ENCODE measurements at regions of chr1 and their contacts with region 1.

Region 1: GRCh38 chr1:16458831-16459230 is 18.3 kb downstream of the NECAP2 start:
- DNase-seq: no peak
- H3K4me3 ChIP-seq: no peak overlapping the region
- H3K27ac ChIP-seq: no peak overlapping the region
- H3K4me1 ChIP-seq: no peaks in the 10 kb centered on the region
- H3K27me3 ChIP-seq: no peaks in the 10 kb centered on the region
- CTCF ChIP-seq: no peak
- POLR2A ChIP-seq: no peak

Region 2: DNA sequence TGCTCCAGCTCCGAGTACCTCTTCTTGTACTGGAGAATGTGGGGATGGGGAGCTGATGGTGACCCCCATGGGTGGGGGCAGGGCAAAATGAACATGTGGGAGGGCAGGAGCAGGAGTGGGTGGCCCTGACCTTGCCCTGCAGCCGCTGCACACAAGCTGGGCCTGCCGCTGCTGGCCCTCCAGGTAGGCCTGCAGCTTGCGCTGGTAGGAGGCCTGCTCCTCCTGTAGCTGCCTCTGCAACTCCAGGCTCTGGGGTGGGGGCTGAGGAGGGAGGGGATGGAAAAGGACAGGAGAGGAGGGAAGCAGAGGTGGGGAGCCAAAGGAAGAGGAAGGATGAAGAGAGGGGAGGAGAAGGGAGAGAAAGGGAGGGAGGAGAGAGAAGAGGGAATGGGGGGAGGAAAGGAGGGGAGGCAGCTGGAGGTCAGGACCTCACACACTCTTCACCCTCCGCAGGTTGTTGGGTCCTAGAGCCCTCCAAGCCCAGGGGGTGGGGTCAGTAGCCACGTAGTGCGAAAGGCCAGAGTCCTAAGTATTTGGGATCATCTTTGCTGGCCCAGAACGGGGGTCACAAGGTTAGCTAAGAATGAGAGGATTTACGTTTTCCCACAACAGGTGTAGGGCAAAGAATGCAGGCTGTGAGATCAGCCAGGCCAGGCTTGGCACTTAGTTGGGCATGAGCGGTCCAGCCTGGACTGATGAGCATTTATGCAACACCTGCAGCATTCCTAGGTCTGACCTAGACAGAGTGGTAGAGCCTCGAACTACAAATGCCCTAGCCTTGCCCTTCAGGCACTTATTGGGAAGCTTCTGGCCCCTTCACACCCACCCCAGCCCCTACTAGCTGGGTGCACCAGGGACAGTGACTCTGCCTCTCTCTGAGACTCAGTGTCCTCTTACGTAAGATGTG is 32.5 kb after region 1 on chr1:
- intact Hi-C with region 1: loop called (anchors 1 kb)
- DNase-seq: peak in 1 of 2 donors; percentile 39
- H3K4me3 ChIP-seq: no peak overlapping the region
- H3K27ac ChIP-seq: no peak overlapping the region
- H3K4me1 ChIP-seq: no peaks in the 10 kb centered on the region
- H3K27me3 ChIP-seq: no peaks in the 10 kb centered on the region
- CTCF ChIP-seq: no peak
- POLR2A ChIP-seq: no peak

Measured in breast epithelium (tissue), 4 donors.